ENCODE measurements at regions of chr7 and their contacts with region 1.

Region 1: DNA sequence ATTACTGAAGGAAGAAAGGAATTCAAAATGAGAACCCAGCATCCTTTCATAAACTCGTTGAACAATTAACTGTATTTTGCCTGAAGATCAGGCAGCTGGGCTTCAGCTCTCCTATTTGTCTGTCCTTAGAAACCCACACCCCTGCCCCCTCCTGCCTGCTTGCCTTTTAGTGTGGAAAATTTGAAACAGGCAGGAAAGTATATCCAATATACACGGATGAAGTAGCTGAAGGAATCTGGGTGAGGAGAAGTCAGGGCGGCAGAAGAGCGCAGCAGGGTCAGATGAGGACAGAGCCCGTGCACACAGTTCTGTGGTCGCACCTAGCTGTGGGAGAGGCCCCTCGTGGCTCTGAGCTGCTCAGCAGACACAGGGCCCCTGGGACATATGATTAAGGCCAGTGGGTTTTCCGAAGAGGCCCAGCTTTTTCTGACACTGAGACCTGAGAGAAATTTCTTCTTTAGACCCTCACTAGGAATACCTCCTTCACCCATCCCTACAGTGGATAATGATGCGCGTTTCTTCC is 87.9 kb downstream of the ACTR3B start:
- DNase-seq: no peak
- ATAC-seq: no peak
- H3K4me3 Mint-ChIP-seq: no peak overlapping the region
- H3K27ac Mint-ChIP-seq: no peak overlapping the region
- H3K4me1 Mint-ChIP-seq: no peaks in the 10 kb centered on the region
- H3K27me3 Mint-ChIP-seq: no peaks in the 10 kb centered on the region
- CTCF ChIP-seq: no peak

Region 2: DNA sequence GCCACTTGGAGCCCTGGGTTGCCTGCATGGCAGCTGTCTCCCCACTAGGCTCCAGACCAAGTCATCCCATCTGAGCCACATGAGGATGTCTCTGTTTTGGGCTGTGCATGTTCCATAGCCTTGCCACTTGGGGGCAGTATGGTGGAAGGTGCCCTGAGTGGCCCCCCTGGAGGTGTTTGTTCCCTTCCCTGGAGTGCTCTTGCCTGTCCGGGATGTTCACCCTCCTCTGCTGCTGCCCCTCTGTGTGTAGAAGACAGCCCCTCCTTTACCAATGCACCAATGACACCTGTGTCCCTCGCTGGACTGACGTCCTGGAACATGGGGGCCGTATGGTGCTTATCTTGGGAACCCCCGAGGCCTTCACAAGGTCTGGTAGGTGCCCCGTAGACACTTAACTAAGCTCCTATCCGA is 12.3 kb after region 1 on chr7:
- CTCF ChIA-PET with region 1: interaction called, 13 read pairs
- POLR2A ChIA-PET with region 1: no interaction called
- DNase-seq: peak; percentile 52
- ATAC-seq: peak; percentile 95
- H3K4me3 Mint-ChIP-seq: no peak overlapping the region
- H3K27ac Mint-ChIP-seq: no peak overlapping the region
- H3K4me1 Mint-ChIP-seq: peaks cover 11% of the 10 kb centered on the region
- H3K27me3 Mint-ChIP-seq: no peaks in the 10 kb centered on the region
- CTCF ChIP-seq: peak; percentile 39; the same call in 1 of the 2 replicates

Measured in WTC11 (cell line).